Tibial artery (tissue), 4 donors: ENCODE measurements at regions of chr10 and their contacts with region 1.

Region 1: GRCh38 chr10:73956476-73957359 is 41.2 kb upstream of the VCL start:
- DNase-seq: peak in 1 of 2 donors; percentile 64
- H3K4me3 ChIP-seq: no peak overlapping the region
- H3K27ac ChIP-seq: peak overlapping the region; percentile 70 to 73
- H3K4me1 ChIP-seq: peaks cover 0 to 12% (median 10%) of the 10 kb centered on the region in 4 donors
- H3K27me3 ChIP-seq: no peaks in the 10 kb centered on the region
- CTCF ChIP-seq: no peak

Region 2: GRCh38 chr10:73997787-73998622 is 41.3 kb after region 1 on chr10 and contains the start of gene VCL:
- intact Hi-C with region 1: no loop called
- DNase-seq: peak; percentile 97 to 99
- H3K4me3 ChIP-seq: peak within 1 kb of the TSS; percentile 83 to 94
- H3K27ac ChIP-seq: peak within 1 kb of the TSS; percentile 87 to 95
- H3K4me1 ChIP-seq: peaks cover 0 to 38% (median 22%) of the 10 kb centered on the region in 4 donors
- H3K27me3 ChIP-seq: no peaks in the 10 kb centered on the region
- CTCF ChIP-seq: peak in 1 of 2 experiments; percentile 7

Region 3: DNA sequence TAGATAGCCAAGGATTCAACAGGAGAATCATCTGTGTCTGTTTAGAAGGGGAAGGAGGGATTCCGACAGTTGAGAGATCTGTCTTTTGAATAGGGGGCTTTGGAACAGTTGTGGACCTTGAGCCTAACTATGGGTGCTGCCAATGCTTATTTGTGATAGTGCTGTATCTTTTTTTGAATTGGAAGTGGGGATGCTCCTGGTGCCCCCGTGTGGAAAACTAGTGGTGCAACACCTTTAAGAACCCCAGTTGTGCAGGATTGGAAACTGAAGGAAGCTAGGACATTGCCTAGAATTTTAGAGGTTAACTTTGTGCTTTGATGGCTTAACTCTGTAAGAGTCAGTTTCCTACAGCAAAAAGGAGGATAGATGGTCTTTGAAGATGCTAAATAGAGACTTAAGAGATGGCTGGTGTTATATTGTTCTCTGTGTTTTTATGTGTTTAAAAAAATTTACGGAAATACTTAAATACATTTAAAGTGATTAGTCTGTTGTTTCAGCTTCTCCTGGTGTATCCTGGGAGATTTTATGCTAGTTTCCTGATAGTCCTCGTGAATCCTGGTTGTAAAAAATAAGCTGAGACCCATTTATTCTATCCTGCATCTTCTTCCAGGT is 124.6 kb after region 1 on chr10:
- intact Hi-C with region 1: loop called (anchors 10 kb)
- DNase-seq: peak in 1 of 2 donors; percentile 35
- H3K4me3 ChIP-seq: no peak overlapping the region
- H3K27ac ChIP-seq: peak overlapping the region in 1 of 2 donors; percentile 3
- H3K4me1 ChIP-seq: peaks cover 0 to 81% (median 26%) of the 10 kb centered on the region in 4 donors
- H3K27me3 ChIP-seq: no peaks in the 10 kb centered on the region
- CTCF ChIP-seq: peak; percentile 75 to 76